ENCODE measurements at regions of chr1 and their contacts with region 1.

Region 1: GRCh38 chr1:87131809-87132283 is 196.8 kb upstream of the LMO4 start:
- DNase-seq: peak; percentile 83 to 89 (median 86)
- H3K4me3 ChIP-seq: peak overlapping the region; percentile 50
- H3K27ac ChIP-seq: peak overlapping the region; percentile 63 to 74
- H3K4me1 ChIP-seq: no peaks in the 10 kb centered on the region
- H3K27me3 ChIP-seq: no peaks in the 10 kb centered on the region
- CTCF ChIP-seq: peak; percentile 76 to 78 (median 77)
- EP300 ChIP-seq: no peak
- POLR2A ChIP-seq: no peak

Region 2: DNA sequence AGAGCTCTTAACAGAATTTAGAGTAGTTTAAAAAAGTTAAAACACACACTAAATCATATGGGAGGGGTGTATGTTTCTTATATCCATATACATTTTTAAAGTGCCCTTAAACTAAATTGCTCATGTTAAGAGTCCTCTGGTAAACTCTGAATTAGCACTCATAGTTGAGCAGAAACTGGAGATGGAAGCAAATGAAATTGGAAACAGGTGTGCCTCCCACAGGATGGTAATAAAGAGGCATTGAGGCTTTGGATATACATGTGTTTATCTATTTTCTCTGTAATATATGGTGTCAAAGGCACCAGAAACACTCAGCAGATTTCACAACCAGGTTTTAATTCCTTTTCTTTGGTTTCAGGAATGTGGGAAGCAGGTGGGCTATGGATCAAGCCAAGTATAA is 28.8 kb before region 1 on chr1:
- intact Hi-C with region 1: no loop called
- DNase-seq: no peak
- H3K4me3 ChIP-seq: no peak overlapping the region
- H3K27ac ChIP-seq: no peak overlapping the region
- H3K4me1 ChIP-seq: no peaks in the 10 kb centered on the region
- H3K27me3 ChIP-seq: no peaks in the 10 kb centered on the region
- CTCF ChIP-seq: no peak
- EP300 ChIP-seq: no peak
- POLR2A ChIP-seq: no peak

Region 3: DNA sequence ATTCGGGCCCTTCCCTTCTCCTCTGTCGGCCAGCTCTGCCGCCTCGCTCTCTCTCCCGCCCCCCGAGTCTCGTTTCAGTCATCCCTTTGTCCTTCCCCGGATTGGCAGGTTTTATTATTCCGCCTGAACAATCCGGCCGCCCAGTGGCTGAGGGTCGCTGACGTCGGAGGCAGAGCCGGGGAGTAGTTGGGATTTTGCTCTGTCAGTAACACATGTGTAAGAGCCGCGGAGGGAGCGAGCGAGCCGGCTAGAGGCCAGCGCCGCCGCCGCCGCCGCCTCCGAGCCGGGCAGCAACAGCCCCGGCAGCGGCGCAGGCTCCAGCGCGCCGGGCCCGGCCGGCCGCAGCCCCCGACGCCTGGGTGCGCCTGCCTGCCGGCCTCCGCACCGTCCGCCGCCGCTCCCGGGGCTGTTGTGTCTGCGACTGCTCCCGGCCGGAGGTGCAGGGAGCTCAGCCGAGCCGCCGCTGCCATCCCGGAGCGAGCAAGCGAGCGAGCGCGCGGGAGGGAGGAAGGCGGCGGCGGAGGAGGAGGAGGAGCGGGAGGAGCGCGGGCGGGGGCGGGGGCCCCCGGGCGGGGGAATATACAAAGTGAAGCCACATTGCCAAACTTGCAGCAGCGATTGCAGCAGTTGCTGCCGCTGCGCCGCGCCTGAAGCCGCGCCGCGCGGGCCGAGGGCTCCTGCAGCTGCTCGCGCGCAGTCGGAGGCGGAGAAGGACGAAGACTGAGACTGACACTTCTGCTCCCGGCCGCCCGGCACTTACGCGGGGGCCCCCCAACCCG is 196.6 kb after region 1 on chr1 and contains the start of gene LMO4:
- intact Hi-C with region 1: loop called in 2 of 4 experiments (anchors 10 kb)
- DNase-seq: peak; percentile 95 to 97 (median 96)
- H3K4me3 ChIP-seq: peak within 1 kb of the TSS; percentile 74
- H3K27ac ChIP-seq: peak within 1 kb of the TSS; percentile 94 to 99
- H3K4me1 ChIP-seq: peaks cover 5% of the 10 kb centered on the region
- H3K27me3 ChIP-seq: no peaks in the 10 kb centered on the region
- CTCF ChIP-seq: peak in 2 of 3 donors; percentile 10 to 32
- EP300 ChIP-seq: no peak
- POLR2A ChIP-seq: peak; percentile 73
- total RNA-seq, gene LMO4: 21.7 to 45.4 (median 35.4) TPM

Region 4: DNA sequence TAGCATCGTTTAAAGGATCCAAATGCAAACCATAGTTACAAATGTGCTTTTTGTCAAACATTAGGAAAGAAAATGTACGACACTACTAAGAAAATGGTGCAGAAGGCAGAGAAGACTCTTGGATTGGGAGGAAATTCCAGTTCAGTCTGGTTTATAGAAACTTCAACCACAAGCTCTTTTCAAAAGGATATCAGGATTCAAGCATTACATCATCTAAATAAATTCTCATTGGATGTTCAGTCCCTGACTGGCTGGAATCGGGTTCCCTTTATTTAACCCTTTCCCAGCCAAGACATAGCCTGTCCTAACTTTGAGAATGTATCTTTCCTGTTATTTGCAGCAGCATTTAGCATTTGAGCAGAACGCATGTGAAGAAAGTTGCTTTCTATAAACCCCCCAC is 381.4 kb after region 1 on chr1:
- intact Hi-C with region 1: no loop called
- DNase-seq: no peak
- H3K4me3 ChIP-seq: no peak overlapping the region
- H3K27ac ChIP-seq: no peak overlapping the region
- H3K4me1 ChIP-seq: peaks cover 1% of the 10 kb centered on the region
- H3K27me3 ChIP-seq: no peaks in the 10 kb centered on the region
- CTCF ChIP-seq: no peak
- EP300 ChIP-seq: no peak
- POLR2A ChIP-seq: no peak

Measured in ovary (tissue), 10 donors.